GM12878 (cell line): ENCODE measurements at regions of chr1 and their contacts with region 1.

Region 1: GRCh38 chr1:235011599-235012435 is 116.8 kb downstream of the TOMM20 start:
- DNase-seq: peak; percentile 100
- ATAC-seq: peak; percentile 75
- H3K4me3 ChIP-seq: peak overlapping the region; percentile 46; the same call in 1 of the 2 replicates
- H3K27ac ChIP-seq: peak overlapping the region; percentile 99
- H3K4me1 ChIP-seq: peaks cover 86% of the 10 kb centered on the region
- H3K27me3 ChIP-seq: no peaks in the 10 kb centered on the region
- CTCF ChIP-seq: no peak
- EP300 ChIP-seq: peak; percentile 100
- POLR2A ChIP-seq: peak; percentile 81
- RAD21 ChIP-seq: peak; percentile 30

Region 2: DNA sequence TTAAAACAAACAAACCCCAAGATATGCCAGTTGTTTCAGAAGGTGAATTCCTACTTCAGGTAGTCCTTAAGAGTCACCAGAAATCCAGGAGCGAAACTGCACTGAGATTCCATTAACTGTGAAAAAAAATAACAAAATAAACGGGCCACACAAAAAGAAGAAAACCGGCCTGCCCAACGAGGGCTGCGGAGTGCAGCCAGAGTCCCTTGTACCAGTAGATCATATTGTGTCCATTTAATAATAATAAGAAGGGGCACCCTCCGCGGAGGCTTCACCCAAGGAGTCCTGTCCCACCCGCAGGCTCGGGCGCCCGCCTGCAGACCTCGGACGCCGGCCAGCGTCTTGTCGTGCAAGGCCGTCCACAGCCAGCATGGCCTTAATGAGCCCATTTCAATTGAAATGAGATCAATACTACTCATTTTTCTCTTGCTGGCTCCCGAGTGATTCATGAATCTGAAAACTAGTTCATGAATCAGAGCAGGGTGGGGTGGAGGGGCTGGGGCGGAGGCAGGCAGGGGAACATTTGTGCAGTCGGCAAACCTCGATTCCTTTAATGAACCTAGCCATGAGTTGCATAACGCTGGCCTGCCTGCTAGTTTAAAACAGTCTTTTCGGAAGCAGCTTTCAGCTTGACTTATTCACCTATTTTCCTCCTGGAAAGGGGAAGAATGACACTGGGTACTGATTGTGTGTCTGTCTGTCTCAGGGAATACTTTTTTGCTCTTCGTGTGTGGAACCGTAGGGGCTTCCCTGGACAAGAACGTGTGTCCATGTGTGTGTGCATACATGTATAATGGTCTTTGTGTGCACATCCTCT is 288.7 kb before region 1 on chr1:
- CTCF ChIA-PET with region 1: no interaction called
- POLR2A ChIA-PET with region 1: no interaction called
- RAD21 ChIA-PET with region 1: interaction called, 15 read pairs
- SMC1A ChIA-PET with region 1: no interaction called
- in situ Hi-C with region 1: no loop called
- intact Hi-C with region 1: no loop called
- DNase-seq: no peak
- ATAC-seq: no peak
- H3K4me3 ChIP-seq: no peak overlapping the region
- H3K27ac ChIP-seq: peak overlapping the region; percentile 94
- H3K4me1 ChIP-seq: peaks cover 49% of the 10 kb centered on the region
- H3K27me3 ChIP-seq: no peaks in the 10 kb centered on the region
- CTCF ChIP-seq: no peak
- EP300 ChIP-seq: no peak
- POLR2A ChIP-seq: no peak
- RAD21 ChIP-seq: no peak

Region 3: DNA sequence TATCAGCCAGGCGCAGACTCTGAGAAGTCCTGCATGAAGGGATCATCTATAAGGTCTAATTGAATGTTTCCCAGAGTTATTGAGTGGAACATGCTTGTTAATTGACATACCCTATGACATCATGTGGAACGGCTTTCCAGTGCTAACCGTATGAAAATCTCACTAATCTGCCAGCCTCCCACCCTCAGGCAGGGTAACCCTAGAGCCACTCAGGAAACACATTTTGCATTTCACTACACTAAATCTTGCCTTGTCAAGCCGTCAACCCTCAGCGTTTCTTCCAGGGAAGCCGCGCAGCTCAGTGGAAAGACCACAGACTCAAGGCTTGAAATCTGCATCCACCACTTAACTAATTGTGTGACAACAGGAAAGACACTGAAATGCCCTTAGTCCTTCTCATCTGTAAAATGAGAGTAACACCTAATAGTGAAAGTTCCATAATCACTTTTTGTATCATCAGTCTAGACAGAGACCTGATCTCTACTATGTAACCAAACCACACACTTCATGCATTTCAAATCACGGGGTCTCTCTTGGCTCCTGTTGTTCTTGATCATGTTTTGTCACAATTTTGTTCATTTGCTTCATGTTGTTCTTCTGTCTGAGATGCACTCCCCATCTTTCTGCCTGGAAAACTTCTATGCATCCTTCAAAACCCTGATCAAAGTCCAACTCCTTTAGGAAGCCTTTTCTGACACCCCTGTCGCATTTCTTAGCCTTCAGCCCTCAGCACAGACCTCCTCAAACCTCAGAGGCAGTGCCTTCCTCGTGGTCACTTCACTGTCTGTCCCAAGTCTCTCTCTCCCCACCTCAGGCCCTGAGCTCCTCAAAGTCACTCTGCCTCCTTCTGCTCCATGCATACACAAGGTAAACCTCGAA is 129.7 kb before region 1 on chr1:
- CTCF ChIA-PET with region 1: no interaction called
- POLR2A ChIA-PET with region 1: interaction called, 5 read pairs
- RAD21 ChIA-PET with region 1: interaction called, 7 read pairs
- SMC1A ChIA-PET with region 1: interaction called, 6 read pairs
- in situ Hi-C with region 1: no loop called
- intact Hi-C with region 1: loop called (anchors 1 kb)
- DNase-seq: peak; percentile 83
- ATAC-seq: peak; percentile 88
- H3K4me3 ChIP-seq: peak overlapping the region; percentile 53
- H3K27ac ChIP-seq: peak overlapping the region; percentile 73
- H3K4me1 ChIP-seq: peaks cover 50% of the 10 kb centered on the region
- H3K27me3 ChIP-seq: no peaks in the 10 kb centered on the region
- CTCF ChIP-seq: no peak
- EP300 ChIP-seq: peak; percentile 90 to 94
- POLR2A ChIP-seq: no peak
- RAD21 ChIP-seq: no peak

Region 4: GRCh38 chr1:234963180-234963903 is 48.5 kb before region 1 on chr1:
- CTCF ChIA-PET with region 1: interaction called, 6 read pairs
- POLR2A ChIA-PET with region 1: interaction called, 4 read pairs
- RAD21 ChIA-PET with region 1: interaction called, 257 read pairs
- SMC1A ChIA-PET with region 1: interaction called, 229 read pairs
- in situ Hi-C with region 1: no loop called
- intact Hi-C with region 1: loop called (anchors 1 kb)
- DNase-seq: peak; percentile 97
- ATAC-seq: peak; percentile 79
- H3K4me3 ChIP-seq: peak overlapping the region; percentile 45; the same call in 1 of the 2 replicates
- H3K27ac ChIP-seq: peak overlapping the region; percentile 96
- H3K4me1 ChIP-seq: peaks cover 59% of the 10 kb centered on the region
- H3K27me3 ChIP-seq: no peaks in the 10 kb centered on the region
- CTCF ChIP-seq: no peak
- EP300 ChIP-seq: peak; percentile 95 to 99
- POLR2A ChIP-seq: no peak
- RAD21 ChIP-seq: 0 out of 2 replicates have a peak, but pooled peaks have one; percentile 24

Region 5: GRCh38 chr1:234987415-234988154 is 24.2 kb before region 1 on chr1:
- CTCF ChIA-PET with region 1: interaction called, 13 read pairs
- POLR2A ChIA-PET with region 1: interaction called, 11 read pairs
- RAD21 ChIA-PET with region 1: interaction called, 82 read pairs
- SMC1A ChIA-PET with region 1: interaction called, 108 read pairs
- in situ Hi-C with region 1: no loop called
- intact Hi-C with region 1: loop called (anchors 1 kb)
- DNase-seq: no peak
- ATAC-seq: peak; percentile 81
- H3K4me3 ChIP-seq: no peak overlapping the region
- H3K27ac ChIP-seq: peak overlapping the region; percentile 80
- H3K4me1 ChIP-seq: peaks cover 62% of the 10 kb centered on the region
- H3K27me3 ChIP-seq: no peaks in the 10 kb centered on the region
- CTCF ChIP-seq: no peak
- EP300 ChIP-seq: peak in 1 of 2 experiments; percentile 24; a peak in 1 of 4 replicates
- POLR2A ChIP-seq: no peak; the same call in 1 of the 2 replicates
- RAD21 ChIP-seq: no peak

Region 6: GRCh38 chr1:235050911-235051360 is 39.1 kb after region 1 on chr1:
- CTCF ChIA-PET with region 1: interaction called, 5 read pairs
- POLR2A ChIA-PET with region 1: interaction called, 17 read pairs
- RAD21 ChIA-PET with region 1: interaction called, 49 read pairs
- SMC1A ChIA-PET with region 1: interaction called, 90 read pairs
- in situ Hi-C with region 1: no loop called
- intact Hi-C with region 1: loop called (anchors 1 kb)
- DNase-seq: no peak
- ATAC-seq: peak; percentile 78
- H3K4me3 ChIP-seq: no peak overlapping the region
- H3K27ac ChIP-seq: no peak overlapping the region
- H3K4me1 ChIP-seq: peaks cover 49% of the 10 kb centered on the region
- H3K27me3 ChIP-seq: no peaks in the 10 kb centered on the region
- CTCF ChIP-seq: no peak
- EP300 ChIP-seq: no peak
- POLR2A ChIP-seq: no peak
- RAD21 ChIP-seq: no peak